ENCODE measurements at regions of chr1 and their contacts with region 1.

Region 1: DNA sequence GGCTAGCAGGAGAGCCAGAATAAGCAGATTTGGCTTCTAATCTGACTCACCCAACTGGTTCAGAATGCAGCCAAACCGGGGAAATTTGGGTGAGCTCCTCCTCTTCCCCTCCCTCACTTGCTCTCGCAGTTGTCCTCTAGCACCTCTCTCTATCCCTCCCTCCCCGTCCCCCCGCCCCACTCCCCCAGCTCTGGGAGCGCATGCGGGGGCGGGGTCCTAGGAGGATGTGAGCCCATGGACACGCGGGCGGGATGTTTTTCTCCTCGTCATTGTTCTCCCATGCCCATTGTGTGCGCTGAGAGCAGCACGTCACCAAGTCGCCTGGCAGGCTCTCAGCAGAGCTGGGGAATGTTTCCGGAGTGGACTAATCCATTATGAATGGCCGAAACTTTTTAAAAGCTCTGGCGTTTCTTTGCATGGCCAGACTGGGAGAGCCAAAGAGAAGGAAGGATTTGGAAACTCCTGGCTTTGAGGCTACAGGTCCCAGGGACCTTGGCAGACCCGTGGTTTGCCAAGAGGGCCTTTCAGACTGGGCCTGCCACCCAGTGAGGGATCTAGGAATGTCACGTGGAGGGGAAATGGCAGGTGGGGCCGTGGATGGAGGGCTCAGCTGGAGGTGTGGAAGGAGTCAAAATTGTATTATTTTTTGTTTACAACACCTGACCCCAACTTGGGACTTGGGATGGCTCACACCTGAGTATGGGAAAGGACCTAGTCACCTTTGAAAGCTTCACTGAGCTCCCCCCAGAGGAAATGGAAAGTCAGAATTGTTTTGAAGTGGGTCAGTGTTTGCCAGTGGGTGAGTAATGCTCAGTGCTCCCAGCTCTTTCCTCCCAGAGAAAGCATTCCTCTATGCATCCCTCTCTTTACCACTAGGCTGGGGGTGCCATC is 39.2 kb downstream of the CDK18 start:
- DNase-seq: peak; percentile 80 to 88 (median 85)
- ATAC-seq: peak; percentile 90 to 94 (median 90)
- H3K4me3 ChIP-seq: peak overlapping the region in 10 of 12 donors; percentile 15 to 48 (median 36)
- H3K27ac ChIP-seq: peak overlapping the region; percentile 26 to 86 (median 79)
- H3K4me1 ChIP-seq: peaks cover 0 to 23% (median 18%) of the 10 kb centered on the region in 12 donors
- H3K27me3 ChIP-seq: peaks cover 0 to 13% (median 0%) of the 10 kb centered on the region in 9 donors
- CTCF ChIP-seq: peak in 1 of 12 donors; percentile 3
- POLR2A ChIP-seq: no peak

Region 2: GRCh38 chr1:205584732-205585131 is 41.1 kb after region 1 on chr1:
- intact Hi-C with region 1: loop called in 4 of 10 experiments (anchors 5 kb)
- DNase-seq: no peak
- ATAC-seq: no peak
- H3K4me3 ChIP-seq: no peak overlapping the region
- H3K27ac ChIP-seq: no peak overlapping the region
- H3K4me1 ChIP-seq: peaks cover 0 to 20% (median 12%) of the 10 kb centered on the region in 12 donors
- H3K27me3 ChIP-seq: peaks cover 0 to 13% (median 0%) of the 10 kb centered on the region in 9 donors
- CTCF ChIP-seq: peak in 9 of 12 donors; percentile 12 to 42 (median 29)
- POLR2A ChIP-seq: no peak

Region 3: GRCh38 chr1:205766038-205766437 is 222.4 kb after region 1 on chr1:
- intact Hi-C with region 1: no loop called
- DNase-seq: no peak
- ATAC-seq: no peak
- H3K4me3 ChIP-seq: no peak overlapping the region
- H3K27ac ChIP-seq: no peak overlapping the region
- H3K4me1 ChIP-seq: no peaks in the 10 kb centered on the region
- H3K27me3 ChIP-seq: no peaks in the 10 kb centered on the region
- CTCF ChIP-seq: no peak
- POLR2A ChIP-seq: no peak

Measured in heart left ventricle (tissue), 16 donors.